GM10248 (cell line): ENCODE measurements at regions of chr7 and their contacts with region 1.

Region 1: DNA sequence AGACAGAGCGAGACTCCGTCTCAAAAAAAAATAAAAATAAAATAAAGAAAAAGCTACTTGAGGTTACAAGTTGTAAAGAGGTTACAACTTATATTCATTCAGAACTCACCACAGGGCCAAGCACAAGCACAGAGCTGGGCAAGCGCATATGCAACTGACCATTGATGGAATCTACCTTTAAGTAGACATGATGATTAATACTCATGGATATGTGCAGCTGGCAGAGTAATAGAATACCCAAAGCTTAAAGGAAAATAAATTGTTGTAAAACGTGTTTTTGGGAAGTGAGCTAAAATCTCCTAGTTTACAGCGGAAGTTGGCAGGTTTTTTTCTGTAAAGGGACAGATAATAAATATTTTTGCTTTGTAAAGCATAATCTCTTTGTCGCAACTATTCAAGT is 111.6 kb downstream of the TMEM168 start:
- DNase-seq: no peak
- CTCF ChIP-seq: no peak

Region 2: DNA sequence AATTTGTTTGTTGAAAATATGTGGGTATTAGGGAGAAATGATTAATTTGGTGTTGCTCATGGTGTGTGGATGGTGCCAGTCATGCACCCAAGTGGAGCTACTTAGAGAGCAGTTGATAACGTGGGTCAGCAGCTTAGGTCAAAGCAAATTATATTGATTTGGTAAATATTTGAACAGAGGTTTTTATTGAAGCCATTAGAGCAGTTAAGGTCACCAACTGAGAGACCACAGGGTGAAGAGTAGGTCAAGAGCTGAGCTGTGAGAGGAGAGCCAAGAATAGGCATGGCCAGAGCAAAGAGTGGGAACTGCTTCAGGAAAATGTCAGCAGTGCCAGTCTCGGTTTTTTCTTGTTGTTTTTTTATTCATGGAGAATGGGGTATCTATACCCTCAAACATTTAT is 13.7 kb after region 1 on chr7:
- CTCF ChIA-PET with region 1: interaction called, 11 read pairs
- POLR2A ChIA-PET with region 1: no interaction called
- DNase-seq: no peak
- CTCF ChIP-seq: no peak